ENCODE measurements at regions of chr17 and their contacts with region 1.

Region 1: GRCh38 chr17:61002316-61002736 is 324.7 kb downstream of the BCAS3 start:
- DNase-seq: no peak
- H3K4me3 ChIP-seq: no peak overlapping the region
- H3K27ac ChIP-seq: no peak overlapping the region
- H3K4me1 ChIP-seq: no peaks in the 10 kb centered on the region
- H3K27me3 ChIP-seq: no peaks in the 10 kb centered on the region
- CTCF ChIP-seq: peak; percentile 37 to 54 (median 48)
- POLR2A ChIP-seq: no peak

Region 2: GRCh38 chr17:61389670-61390478 is 387.5 kb after region 1 on chr17:
- intact Hi-C with region 1: loop called (anchors 10 kb)
- DNase-seq: peak; percentile 29 to 52
- H3K4me3 ChIP-seq: no peak overlapping the region
- H3K27ac ChIP-seq: peak overlapping the region; percentile 6 to 49
- H3K4me1 ChIP-seq: peaks cover 0 to 8% of the 10 kb centered on the region in 2 donors
- H3K27me3 ChIP-seq: no peaks in the 10 kb centered on the region
- CTCF ChIP-seq: peak; percentile 72 to 93 (median 84)
- POLR2A ChIP-seq: no peak